OCI-LY7 (cell line): ENCODE measurements at regions of chr20 and their contacts with region 1.

Region 1: GRCh38 chr20:33791959-33792597 is 19.1 kb upstream of the CHMP4B start:
- DNase-seq: peak; percentile 59
- H3K4me3 ChIP-seq: no peak overlapping the region
- H3K27ac ChIP-seq: no peak overlapping the region
- H3K4me1 ChIP-seq: peaks cover 7% of the 10 kb centered on the region
- CTCF ChIP-seq: peak; percentile 91

Region 2: GRCh38 chr20:34083137-34083536 is 291.1 kb after region 1 on chr20:
- CTCF ChIA-PET with region 1: no interaction called
- POLR2A ChIA-PET with region 1: no interaction called
- intact Hi-C with region 1: loop called (anchors 5 kb)
- DNase-seq: no peak
- H3K4me3 ChIP-seq: peak overlapping the region; percentile 17
- H3K27ac ChIP-seq: peak overlapping the region; percentile 87
- H3K4me1 ChIP-seq: peaks cover 39% of the 10 kb centered on the region
- CTCF ChIP-seq: 0 out of 2 replicates have a peak, but pooled peaks have one; percentile 36